Activated naive CD4-positive, alpha-beta T cell treated with anti-CD3 and anti-CD28 coated beads, Interleukin-2, amount 10 ng/mL, durations not matched to agents 7 days and 5 days (primary cell): ENCODE measurements at regions of chr2 and their contacts with region 1.

Region 1: DNA sequence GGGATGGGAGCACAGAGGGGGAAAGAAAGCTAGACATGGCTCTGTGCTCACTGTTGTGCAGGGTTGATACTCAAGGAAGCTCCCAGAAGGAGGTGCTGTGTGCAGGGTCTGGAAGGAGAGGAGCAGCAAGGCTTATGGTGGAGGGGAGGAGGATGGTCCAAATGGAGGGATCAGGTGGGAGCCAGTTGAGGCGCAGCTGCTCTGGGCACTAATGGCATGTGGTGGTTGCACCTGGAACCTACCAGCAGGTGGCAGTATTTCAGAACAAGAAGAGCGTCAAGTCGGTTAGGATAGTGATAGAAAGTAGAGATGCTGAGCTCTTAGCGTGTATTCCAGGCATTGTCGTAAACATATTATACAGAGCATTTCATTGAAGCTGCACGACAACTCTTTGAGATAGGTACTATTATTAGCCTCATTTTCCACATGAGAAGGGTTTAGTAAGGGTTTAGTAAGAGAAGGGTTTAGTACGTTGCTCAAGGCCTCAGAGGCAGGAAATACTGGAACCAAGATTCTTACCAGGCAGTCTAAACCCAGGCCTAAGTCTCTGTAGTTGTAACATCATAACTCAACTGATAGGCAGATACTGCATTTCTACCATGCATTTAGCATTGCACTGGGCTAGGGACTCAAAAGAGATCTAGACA is 223.7 kb downstream of the CYP26B1 start:
- DNase-seq: peak; percentile 62
- H3K4me3 Mint-ChIP-seq: no peak overlapping the region
- H3K27ac Mint-ChIP-seq: no peak overlapping the region
- H3K4me1 Mint-ChIP-seq: no peaks in the 10 kb centered on the region
- H3K27me3 Mint-ChIP-seq: no peaks in the 10 kb centered on the region

Region 2: DNA sequence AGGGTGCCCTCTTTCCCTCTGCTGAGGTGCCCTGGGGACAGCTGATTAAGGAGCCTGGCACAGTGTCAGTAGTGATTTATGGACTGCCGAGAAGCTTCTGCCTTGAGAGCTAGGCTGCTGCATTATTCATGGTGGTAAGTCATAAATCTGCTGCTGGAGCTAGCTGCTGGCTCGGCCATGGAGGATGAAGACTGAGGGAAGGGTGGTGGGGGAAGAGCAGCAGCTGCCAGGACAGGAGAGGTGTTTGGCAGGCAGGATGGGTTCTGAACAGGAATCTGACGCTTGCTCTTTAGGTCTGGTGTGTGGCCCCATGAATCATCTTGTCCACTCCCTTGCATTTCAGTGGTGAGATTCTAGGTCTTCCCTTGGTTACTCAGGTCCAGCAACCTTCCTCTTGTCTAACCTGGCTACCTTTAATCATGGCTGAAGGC is 174.3 kb before region 1 on chr2:
- CTCF ChIA-PET with region 1: no interaction called
- DNase-seq: no peak
- H3K4me3 Mint-ChIP-seq: no peak overlapping the region
- H3K27ac Mint-ChIP-seq: no peak overlapping the region
- H3K4me1 Mint-ChIP-seq: no peaks in the 10 kb centered on the region
- H3K27me3 Mint-ChIP-seq: no peaks in the 10 kb centered on the region

Region 3: GRCh38 chr2:71897137-71897480 is 26.9 kb before region 1 on chr2:
- CTCF ChIA-PET with region 1: no interaction called
- DNase-seq: no peak
- H3K4me3 Mint-ChIP-seq: no peak overlapping the region
- H3K27ac Mint-ChIP-seq: no peak overlapping the region
- H3K4me1 Mint-ChIP-seq: no peaks in the 10 kb centered on the region
- H3K27me3 Mint-ChIP-seq: no peaks in the 10 kb centered on the region

Region 4: GRCh38 chr2:71995067-71995665 is 71.2 kb after region 1 on chr2:
- CTCF ChIA-PET with region 1: no interaction called
- DNase-seq: no peak
- H3K4me3 Mint-ChIP-seq: no peak overlapping the region
- H3K27ac Mint-ChIP-seq: no peak overlapping the region
- H3K4me1 Mint-ChIP-seq: no peaks in the 10 kb centered on the region
- H3K27me3 Mint-ChIP-seq: peaks cover 1% of the 10 kb centered on the region

Region 5: GRCh38 chr2:72150157-72150865 is 226.3 kb after region 1 on chr2:
- CTCF ChIA-PET with region 1: interaction called, 46 read pairs
- DNase-seq: peak; percentile 65
- H3K4me3 Mint-ChIP-seq: peak overlapping the region; percentile 2
- H3K27ac Mint-ChIP-seq: peak overlapping the region; percentile 71
- H3K4me1 Mint-ChIP-seq: peaks cover 32% of the 10 kb centered on the region
- H3K27me3 Mint-ChIP-seq: peaks cover 85% of the 10 kb centered on the region

Region 6: GRCh38 chr2:72579591-72580180 is 655.7 kb after region 1 on chr2:
- CTCF ChIA-PET with region 1: interaction called, 11 read pairs
- DNase-seq: no peak
- H3K4me3 Mint-ChIP-seq: no peak overlapping the region
- H3K27ac Mint-ChIP-seq: no peak overlapping the region
- H3K4me1 Mint-ChIP-seq: no peaks in the 10 kb centered on the region
- H3K27me3 Mint-ChIP-seq: no peaks in the 10 kb centered on the region

Region 7: DNA sequence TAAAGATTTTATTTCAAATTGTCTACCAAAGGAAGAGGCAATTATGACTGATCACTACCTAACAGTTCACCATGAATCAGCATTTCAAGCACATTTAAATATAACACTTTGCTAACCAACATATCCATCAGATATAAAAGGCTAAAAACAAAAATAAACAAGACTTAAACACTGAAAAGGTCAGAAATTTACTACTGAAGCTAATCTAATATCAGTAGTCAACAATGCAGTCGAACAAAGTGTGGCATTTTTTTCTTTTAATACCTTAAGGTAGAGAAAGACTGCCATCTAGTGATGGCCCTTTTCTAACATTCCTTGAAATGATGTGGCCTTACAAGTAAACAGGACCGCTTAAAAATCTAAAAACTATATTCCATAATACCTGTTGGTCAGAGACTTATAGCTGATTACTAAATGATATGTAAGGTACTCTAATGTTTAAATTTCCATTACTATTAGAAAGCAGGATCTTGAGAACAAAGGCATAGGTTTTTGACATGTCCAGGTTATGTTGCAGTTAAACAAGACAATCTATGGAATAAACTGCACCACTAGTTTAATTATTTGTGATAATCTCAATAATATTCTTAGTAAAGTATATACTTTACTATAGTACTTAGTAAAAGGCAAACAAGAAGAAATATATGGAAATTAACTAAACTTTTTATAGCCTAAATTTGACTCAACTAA is 821.8 kb after region 1 on chr2:
- CTCF ChIA-PET with region 1: interaction called, 14 read pairs
- DNase-seq: no peak
- H3K4me3 Mint-ChIP-seq: no peak overlapping the region
- H3K27ac Mint-ChIP-seq: no peak overlapping the region
- H3K4me1 Mint-ChIP-seq: no peaks in the 10 kb centered on the region
- H3K27me3 Mint-ChIP-seq: no peaks in the 10 kb centered on the region